ENCODE measurements at regions of chr5 and their contacts with region 1.

Region 1: DNA sequence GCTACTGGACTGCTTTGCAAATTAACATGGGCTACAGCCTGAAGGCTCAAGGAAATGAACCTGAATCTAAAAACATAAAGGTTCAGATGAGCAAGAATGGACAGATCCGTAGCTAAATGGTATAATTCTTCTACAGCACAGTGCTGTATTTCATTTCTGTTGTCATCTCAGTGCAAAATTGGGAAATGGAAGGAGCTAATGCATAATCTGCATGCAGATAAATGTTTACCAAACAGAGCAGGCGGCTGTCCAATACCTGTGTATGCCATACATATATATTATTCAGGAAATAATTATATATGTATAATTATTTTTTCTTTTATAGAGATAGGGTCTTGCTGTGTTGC is 4.3 kb upstream of the HSPA9 start:
- DNase-seq: no peak
- H3K27ac ChIP-seq: no peak overlapping the region
- CTCF ChIP-seq: peak; percentile 53

Region 2: DNA sequence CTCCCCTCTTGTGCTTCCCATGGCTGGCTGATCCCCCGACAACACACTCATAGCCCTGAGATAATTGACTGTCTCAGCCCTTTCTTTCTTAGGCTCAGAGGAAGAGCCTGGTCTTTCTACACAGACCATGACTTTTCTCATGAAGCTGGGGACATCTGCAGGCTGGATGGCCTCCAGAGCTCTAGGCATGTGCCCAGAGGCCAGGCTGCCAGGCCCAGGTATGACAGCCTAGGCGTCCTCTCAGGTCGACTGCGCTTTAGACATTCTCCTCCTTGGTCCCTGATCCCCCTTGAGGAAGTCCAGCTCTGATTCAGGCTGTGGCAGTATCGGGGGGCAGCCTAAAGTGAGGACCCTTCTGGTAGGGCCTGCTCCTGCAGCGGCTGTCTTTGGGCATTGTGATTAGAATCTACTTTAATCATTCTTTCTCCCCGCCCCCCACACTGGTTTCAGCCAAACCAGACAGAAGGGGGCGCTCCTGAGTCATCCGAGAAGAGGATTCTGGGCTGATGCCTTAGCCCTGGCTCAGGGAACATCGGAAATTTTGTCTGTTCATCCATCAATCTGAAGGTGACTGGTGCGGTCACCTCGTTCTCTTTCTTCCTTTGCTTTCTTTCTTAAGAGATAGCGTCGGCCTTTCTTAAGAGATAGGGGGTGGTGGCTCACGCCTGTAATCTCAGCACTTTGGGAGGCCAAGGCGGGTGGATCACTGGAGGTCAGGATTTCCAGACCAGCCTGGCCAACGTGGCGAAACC is 62.2 kb after region 1 on chr5:
- CTCF ChIA-PET with region 1: interaction called, 11 read pairs
- POLR2A ChIA-PET with region 1: no interaction called
- DNase-seq: peak; percentile 68
- H3K27ac ChIP-seq: no peak overlapping the region
- CTCF ChIP-seq: peak; percentile 59

Region 3: DNA sequence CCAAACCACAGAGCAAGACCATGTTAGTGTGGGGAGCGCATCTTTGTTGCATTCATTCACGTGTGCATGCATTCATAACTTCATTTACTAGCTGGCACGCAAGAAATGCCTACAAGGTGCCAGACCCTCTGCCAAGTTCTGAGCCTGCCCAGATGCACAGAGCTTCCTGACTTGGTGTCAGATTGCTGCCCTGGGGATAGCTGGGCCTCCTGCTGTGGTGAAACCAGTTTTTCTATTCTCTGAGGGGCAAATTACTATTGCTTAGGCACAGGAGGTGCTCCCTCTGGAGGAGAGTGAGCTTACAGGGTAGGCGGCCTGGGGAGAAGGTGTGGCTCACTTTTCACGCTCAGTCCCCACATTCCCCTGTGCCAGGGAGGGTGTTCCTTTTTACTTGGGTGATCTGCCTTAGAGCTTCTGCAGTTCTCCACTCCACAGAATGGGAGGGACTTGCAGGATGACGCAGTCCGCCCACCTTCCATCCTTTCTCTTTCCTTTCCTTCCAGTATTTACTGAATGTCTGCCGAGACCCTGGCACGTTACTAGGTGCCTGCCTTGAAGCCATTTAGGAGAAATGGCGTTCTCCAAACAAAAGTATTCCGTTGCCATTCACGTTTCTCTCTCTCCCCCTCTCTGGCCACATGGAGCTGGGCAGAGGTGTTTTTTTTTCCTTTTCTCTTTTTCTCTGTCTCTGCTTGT is 145.8 kb after region 1 on chr5:
- CTCF ChIA-PET with region 1: interaction called, 18 read pairs
- POLR2A ChIA-PET with region 1: no interaction called
- DNase-seq: peak; percentile 92
- H3K27ac ChIP-seq: peak overlapping the region; percentile 63
- CTCF ChIP-seq: no peak; the same call in 1 of the 2 replicates

Region 4: DNA sequence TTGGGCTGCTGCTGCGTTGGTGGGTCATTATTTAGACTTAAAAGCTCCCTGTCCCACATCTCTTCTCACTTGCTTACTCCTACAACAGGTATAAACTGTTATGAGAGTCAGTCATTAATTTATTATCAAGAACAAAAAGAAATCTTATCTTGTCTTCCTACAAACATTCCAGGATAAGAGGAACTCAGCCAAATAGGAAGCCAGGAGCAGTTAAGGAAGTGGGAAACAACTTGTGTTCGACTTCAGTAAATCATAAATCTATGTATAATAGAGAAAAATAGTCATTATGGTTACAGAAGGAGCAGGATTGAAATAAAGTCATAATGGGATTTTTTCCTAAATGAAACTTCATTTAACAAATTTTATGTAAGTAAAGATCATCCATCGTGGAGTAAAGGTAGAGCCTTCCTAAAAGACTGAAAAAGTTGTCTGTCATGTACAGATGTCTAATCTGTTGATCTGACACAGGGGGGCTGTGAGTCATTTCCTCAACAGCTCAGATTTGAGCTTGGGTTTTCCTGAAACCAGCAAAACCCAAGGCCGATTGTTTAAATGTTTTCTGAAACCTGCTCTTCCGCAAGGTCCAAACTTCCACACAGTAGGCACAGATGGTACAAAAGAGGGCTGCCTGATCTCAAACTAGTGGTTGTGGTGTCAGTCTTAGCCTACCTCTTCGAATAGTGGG is 320.9 kb after region 1 on chr5:
- CTCF ChIA-PET with region 1: interaction called, 10 read pairs
- POLR2A ChIA-PET with region 1: no interaction called
- DNase-seq: peak; percentile 76
- H3K27ac ChIP-seq: no peak overlapping the region
- CTCF ChIP-seq: no peak

Region 5: GRCh38 chr5:139262742-139263445 is 683.4 kb after region 1 on chr5:
- CTCF ChIA-PET with region 1: interaction called, 10 read pairs
- POLR2A ChIA-PET with region 1: no interaction called
- DNase-seq: peak; percentile 96
- H3K27ac ChIP-seq: no peak overlapping the region
- CTCF ChIP-seq: peak; percentile 99